PC-9 (cell line): ENCODE measurements at regions of chr2 and their contacts with region 1.

Region 1: GRCh38 chr2:97718051-97718882 is 4.9 kb downstream of the ZAP70 start:
- DNase-seq: no peak
- H3K4me3 ChIP-seq: no peak overlapping the region
- H3K27ac ChIP-seq: no peak overlapping the region
- H3K4me1 ChIP-seq: no peaks in the 10 kb centered on the region
- H3K27me3 ChIP-seq: peaks cover 15% of the 10 kb centered on the region; the same call in 1 of the 2 replicates
- CTCF ChIP-seq: no peak

Region 2: DNA sequence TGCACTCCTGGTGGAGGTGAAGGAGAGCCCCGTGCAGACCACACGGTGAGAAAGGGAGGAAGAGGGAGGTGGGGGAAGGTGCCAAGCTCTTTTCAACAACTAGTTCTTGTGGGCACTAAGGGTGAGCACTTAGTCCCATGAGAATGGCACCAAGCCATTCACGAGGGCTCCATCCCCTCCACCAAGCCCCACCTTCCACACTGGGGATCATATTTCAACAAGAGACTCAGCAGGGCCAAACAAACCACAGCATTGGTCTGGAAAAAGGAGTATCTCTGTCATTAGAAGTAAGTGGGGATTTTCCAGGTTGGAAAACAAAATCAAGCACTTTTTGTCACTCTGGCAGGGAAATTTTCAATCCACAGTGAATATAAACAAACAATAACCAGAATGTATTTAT is 33.5 kb after region 1 on chr2:
- CTCF ChIA-PET with region 1: interaction called, 4 read pairs
- POLR2A ChIA-PET with region 1: no interaction called
- intact Hi-C with region 1: loop called (anchors 5 kb)
- DNase-seq: peak in 1 of 2 experiments; percentile 30
- H3K4me3 ChIP-seq: no peak overlapping the region
- H3K27ac ChIP-seq: peak overlapping the region; percentile 55; the same call in 1 of the 2 replicates
- H3K4me1 ChIP-seq: peaks cover 25% of the 10 kb centered on the region
- H3K27me3 ChIP-seq: no peaks in the 10 kb centered on the region
- CTCF ChIP-seq: no peak

Region 3: GRCh38 chr2:98608116-98608999 is 890.1 kb after region 1 on chr2 and contains the starts of genes COA5 and UNC50:
- CTCF ChIA-PET with region 1: no interaction called
- POLR2A ChIA-PET with region 1: no interaction called
- intact Hi-C with region 1: loop called (anchors 10 kb)
- DNase-seq: peak; percentile 83 to 91
- H3K4me3 ChIP-seq: peak within 1 kb of the TSS; percentile 77
- H3K27ac ChIP-seq: peak within 1 kb of the TSS; percentile 70
- H3K4me1 ChIP-seq: peaks cover 25% of the 10 kb centered on the region
- H3K27me3 ChIP-seq: no peaks in the 10 kb centered on the region
- CTCF ChIP-seq: peak; percentile 1
- total RNA-seq, gene COA5: 37.5 and 43.6 TPM in 2 replicates
- total RNA-seq, gene UNC50: 38.1 and 46.0 TPM in 2 replicates

Region 4: DNA sequence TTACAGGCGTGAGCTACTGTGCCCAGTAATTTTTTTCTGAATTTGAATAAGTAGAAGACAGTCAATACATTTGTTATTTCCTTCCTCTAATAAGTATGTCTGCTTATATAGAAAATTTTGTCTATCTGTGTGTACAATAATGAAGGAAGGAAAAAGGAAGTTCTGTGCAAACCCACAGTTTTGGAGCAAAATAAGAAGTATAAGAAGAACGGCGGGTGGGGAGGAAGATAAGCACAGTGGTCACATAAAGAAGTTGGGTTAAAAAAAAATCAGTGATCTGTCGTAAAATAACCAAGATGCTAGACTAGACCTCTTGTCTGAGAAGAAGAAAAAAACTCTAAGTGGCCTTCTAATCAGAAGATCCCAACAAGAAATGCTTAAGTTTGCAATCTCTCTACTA is 992.5 kb after region 1 on chr2:
- CTCF ChIA-PET with region 1: no interaction called
- POLR2A ChIA-PET with region 1: interaction called, 19 read pairs
- intact Hi-C with region 1: no loop called
- DNase-seq: no peak
- H3K4me3 ChIP-seq: no peak overlapping the region
- H3K27ac ChIP-seq: no peak overlapping the region
- H3K4me1 ChIP-seq: no peaks in the 10 kb centered on the region
- H3K27me3 ChIP-seq: no peaks in the 10 kb centered on the region
- CTCF ChIP-seq: no peak